BJ (cell line): ENCODE measurements at regions of chr2 and their contacts with region 1.

Region 1: DNA sequence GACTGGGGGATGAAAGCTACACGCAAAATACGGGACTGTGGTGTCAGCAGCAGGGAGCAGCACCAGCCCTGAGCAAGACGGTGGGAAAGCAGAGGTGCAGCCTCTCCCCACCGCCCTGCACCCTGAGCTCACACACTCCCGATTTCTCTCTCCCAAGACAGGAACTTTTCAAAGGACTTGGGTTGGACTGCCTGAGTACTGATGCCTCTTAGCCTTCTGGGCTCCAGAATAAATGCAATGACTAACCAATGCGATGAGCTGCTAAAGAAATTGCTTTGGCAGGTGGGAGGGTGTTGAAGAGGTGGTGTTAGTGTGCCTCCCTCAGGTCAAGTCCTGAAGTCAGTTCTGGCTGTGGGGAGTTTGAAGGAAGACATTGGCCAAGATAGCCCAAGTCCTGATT is 9.6 kb downstream of the TRIM54 start:
- DNase-seq: no peak
- H3K4me3 ChIP-seq: no peak overlapping the region
- H3K27me3 ChIP-seq: peaks cover 12% of the 10 kb centered on the region
- CTCF ChIP-seq: no peak

Region 2: GRCh38 chr2:26946841-26947784 is 344.8 kb before region 1 on chr2:
- CTCF ChIA-PET with region 1: no interaction called
- POLR2A ChIA-PET with region 1: no interaction called
- DNase-seq: no peak
- H3K4me3 ChIP-seq: no peak overlapping the region
- H3K27me3 ChIP-seq: peaks cover 13% of the 10 kb centered on the region
- CTCF ChIP-seq: 0 out of 2 replicates have a peak, but pooled peaks have one; percentile 6

Region 3: GRCh38 chr2:27241761-27242613 is 49.9 kb before region 1 on chr2:
- CTCF ChIA-PET with region 1: no interaction called
- POLR2A ChIA-PET with region 1: interaction called, 10 read pairs
- DNase-seq: no peak
- H3K4me3 ChIP-seq: no peak overlapping the region
- H3K27me3 ChIP-seq: no peaks in the 10 kb centered on the region
- CTCF ChIP-seq: no peak

Region 4: DNA sequence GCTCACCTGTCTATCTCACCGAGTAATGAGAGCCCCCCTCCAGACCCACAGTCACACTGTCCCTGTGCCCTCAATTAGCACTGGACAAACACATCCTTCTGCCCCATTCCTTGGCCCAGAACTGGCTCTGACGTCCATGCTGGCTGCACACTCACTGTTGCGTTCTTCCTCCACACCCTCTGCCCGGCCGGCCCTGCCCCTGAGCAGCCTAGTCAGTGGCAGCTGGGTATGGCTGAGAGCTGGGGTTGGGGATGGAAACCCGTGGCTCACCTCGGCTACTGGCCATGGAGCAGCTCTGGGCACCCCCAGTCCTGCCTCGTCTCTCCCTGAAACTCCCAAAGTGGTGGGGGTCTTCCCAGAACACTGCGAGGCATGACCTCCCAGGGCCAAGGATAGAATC is 22.8 kb after region 1 on chr2:
- CTCF ChIA-PET with region 1: no interaction called
- POLR2A ChIA-PET with region 1: interaction called, 12 read pairs
- DNase-seq: no peak
- H3K4me3 ChIP-seq: no peak overlapping the region
- H3K27me3 ChIP-seq: no peaks in the 10 kb centered on the region
- CTCF ChIP-seq: no peak